ENCODE measurements at regions of chr20 and their contacts with region 1.

Region 1: GRCh38 chr20:59222253-59223181 is 58.9 kb downstream of the ZNF831 start:
- DNase-seq: peak; percentile 70 to 95
- H3K4me3 ChIP-seq: peak overlapping the region; percentile 24
- CTCF ChIP-seq: peak in 1 of 3 donors; percentile 69
- POLR2A ChIP-seq: no peak

Region 2: GRCh38 chr20:58868795-58869194 is 353.7 kb before region 1 on chr20:
- intact Hi-C with region 1: loop called (anchors 5 kb)
- DNase-seq: peak in 1 of 2 donors; percentile 52
- H3K4me3 ChIP-seq: no peak overlapping the region
- CTCF ChIP-seq: no peak
- POLR2A ChIP-seq: no peak

Region 3: GRCh38 chr20:59087829-59088433 is 134.6 kb before region 1 on chr20:
- intact Hi-C with region 1: loop called (anchors 5 kb)
- DNase-seq: peak; percentile 73 to 97
- H3K4me3 ChIP-seq: no peak overlapping the region
- CTCF ChIP-seq: no peak
- POLR2A ChIP-seq: no peak

Measured in lower leg skin (tissue), 4 donors.